CD8-positive, alpha-beta T cell (primary cell): ENCODE measurements at regions of chr19 and their contacts with region 1.

Region 1: DNA sequence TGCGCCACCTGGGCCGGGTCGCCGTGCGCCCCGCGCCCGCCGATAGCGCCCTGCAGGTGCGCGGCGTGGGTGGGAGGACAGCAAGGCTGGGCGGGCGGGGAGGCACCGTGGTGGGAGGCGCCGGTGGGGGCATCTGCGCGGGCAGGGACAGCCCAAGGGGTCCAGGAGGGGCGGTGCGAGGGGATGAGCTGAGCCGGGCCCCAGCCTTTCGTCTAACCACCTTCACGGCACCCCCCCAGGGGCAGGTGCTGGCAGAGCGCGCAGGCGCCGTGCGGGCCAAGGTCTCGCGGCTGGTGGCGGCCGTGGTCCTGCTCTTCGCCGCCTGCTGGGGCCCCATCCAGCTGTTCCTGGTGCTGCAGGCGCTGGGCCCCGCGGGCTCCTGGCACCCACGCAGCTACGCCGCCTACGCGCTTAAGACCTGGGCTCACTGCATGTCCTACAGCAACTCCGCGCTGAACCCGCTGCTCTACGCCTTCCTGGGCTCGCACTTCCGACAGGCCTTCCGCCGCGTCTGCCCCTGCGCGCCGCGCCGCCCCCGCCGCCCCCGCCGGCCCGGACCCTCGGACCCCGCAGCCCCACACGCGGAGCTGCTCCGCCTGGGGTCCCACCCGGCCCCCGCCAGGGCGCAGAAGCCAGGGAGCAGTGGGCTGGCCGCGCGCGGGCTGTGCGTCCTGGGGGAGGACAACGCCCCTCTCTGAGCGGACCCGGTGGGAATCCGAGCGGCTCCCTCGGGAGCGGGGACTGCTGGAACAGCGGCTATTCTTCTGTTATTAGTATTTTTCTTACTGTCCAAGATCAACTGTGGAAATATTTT is 3.1 kb downstream of the KISS1R start:
- DNase-seq: peak in 8 of 9 experiments; percentile 58 to 84 (median 80)
- ATAC-seq: peak; percentile 48
- H3K4me3 ChIP-seq: peak overlapping the region; percentile 40 to 57
- H3K4me3 Mint-ChIP-seq: peak overlapping the region; percentile 82
- H3K27ac ChIP-seq: peak overlapping the region in 1 of 2 experiments; percentile 21
- H3K27ac Mint-ChIP-seq: peak overlapping the region; percentile 93
- H3K4me1 ChIP-seq: peaks cover 48% of the 10 kb centered on the region
- H3K4me1 Mint-ChIP-seq: peaks cover 25% of the 10 kb centered on the region
- H3K27me3 ChIP-seq: peaks cover 0 to 29% of the 10 kb centered on the region in 2 experiments
- H3K27me3 Mint-ChIP-seq: no peaks in the 10 kb centered on the region
- CTCF ChIP-seq: no peak

Region 2: DNA sequence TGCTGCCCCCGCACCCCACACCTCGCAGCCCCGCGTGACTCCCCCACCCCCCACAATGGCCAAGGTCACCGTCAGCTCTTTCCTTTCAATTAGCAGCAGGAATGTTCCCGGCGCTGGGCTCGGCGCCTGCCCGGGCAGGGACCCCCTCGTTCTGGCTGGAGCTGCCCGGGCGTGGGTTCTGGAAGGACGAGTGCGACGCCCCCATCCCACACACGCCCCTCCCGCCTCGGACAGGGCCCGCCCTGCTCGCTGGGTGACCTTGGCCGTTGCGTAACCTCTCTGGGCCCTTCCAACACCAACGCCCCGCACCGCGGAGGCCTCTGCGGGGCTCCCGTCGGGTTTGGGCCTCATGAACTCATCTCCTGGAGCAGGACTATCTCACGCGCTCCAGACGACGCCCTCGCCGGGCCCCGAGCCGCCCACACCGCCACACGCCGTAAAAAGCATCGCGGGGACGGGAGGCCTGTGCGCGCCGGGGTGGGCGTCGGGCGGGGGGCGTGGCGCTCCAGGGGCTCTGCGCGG is 201.2 kb before region 1 on chr19:
- CTCF ChIA-PET with region 1: no interaction called
- POLR2A ChIA-PET with region 1: no interaction called
- intact Hi-C with region 1: no loop called
- DNase-seq: no peak
- ATAC-seq: no peak
- H3K4me3 ChIP-seq: no peak overlapping the region
- H3K4me3 Mint-ChIP-seq: no peak overlapping the region
- H3K27ac ChIP-seq: no peak overlapping the region
- H3K27ac Mint-ChIP-seq: no peak overlapping the region
- H3K4me1 ChIP-seq: no peaks in the 10 kb centered on the region
- H3K4me1 Mint-ChIP-seq: no peaks in the 10 kb centered on the region
- H3K27me3 ChIP-seq: peaks cover 4 to 12% of the 10 kb centered on the region in 2 experiments
- H3K27me3 Mint-ChIP-seq: peaks cover 24% of the 10 kb centered on the region
- CTCF ChIP-seq: no peak

Region 3: GRCh38 chr19:900302-901111 is 19.8 kb before region 1 on chr19:
- CTCF ChIA-PET with region 1: interaction called, 11 read pairs
- POLR2A ChIA-PET with region 1: no interaction called
- intact Hi-C with region 1: no loop called
- DNase-seq: peak in 4 of 9 experiments; percentile 36 to 66 (median 59)
- ATAC-seq: peak; percentile 72
- H3K4me3 ChIP-seq: no peak overlapping the region
- H3K4me3 Mint-ChIP-seq: no peak overlapping the region
- H3K27ac ChIP-seq: no peak overlapping the region
- H3K27ac Mint-ChIP-seq: no peak overlapping the region
- H3K4me1 ChIP-seq: peaks cover 29% of the 10 kb centered on the region
- H3K4me1 Mint-ChIP-seq: peaks cover 24% of the 10 kb centered on the region
- H3K27me3 ChIP-seq: no peaks in the 10 kb centered on the region
- H3K27me3 Mint-ChIP-seq: no peaks in the 10 kb centered on the region
- CTCF ChIP-seq: no peak